Cardiac septum (tissue), 1 donor: ENCODE measurements at regions of chrX and their contacts with region 1.

Region 1: DNA sequence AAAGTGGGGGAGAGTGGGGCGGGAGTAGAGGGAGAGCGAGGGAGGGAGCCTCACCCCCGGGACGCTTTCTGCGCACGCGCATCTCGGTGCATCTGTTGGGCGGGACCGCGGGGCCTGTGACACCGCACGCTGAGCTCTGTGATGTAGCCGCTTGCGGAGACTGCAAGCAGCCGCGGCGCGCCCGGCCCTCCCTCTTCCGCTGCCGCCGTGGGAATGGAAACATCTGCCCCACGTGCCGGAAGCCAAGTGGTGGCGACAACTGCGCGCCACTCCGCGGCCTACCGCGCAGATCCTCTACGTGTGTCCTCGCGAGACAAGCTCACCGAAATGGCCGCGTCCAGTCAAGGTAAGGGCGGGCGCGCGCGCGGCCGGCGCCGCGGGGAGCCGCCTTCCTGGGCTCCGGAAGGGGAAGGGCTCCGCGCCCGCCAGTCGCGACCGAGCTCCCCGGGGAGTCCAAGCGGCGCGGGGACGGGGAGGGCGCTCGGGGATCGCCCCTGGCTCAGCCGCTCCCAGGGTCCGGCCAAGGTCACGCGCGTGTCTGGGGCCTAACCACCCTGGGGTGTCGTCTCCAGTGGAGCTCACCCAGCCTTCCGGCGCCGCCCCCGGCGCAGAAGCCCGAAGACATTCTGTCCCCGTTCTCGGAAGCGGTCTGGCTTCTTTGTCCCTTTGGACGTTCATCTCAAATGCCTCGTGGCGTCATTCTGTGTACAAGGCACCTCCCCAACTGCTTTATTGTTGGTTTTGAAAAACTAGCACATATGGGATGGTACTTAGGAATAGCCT is at the start of gene FUNDC2:
- DNase-seq: peak; percentile 96
- total RNA-seq, gene FUNDC2: 207 TPM

Region 2: DNA sequence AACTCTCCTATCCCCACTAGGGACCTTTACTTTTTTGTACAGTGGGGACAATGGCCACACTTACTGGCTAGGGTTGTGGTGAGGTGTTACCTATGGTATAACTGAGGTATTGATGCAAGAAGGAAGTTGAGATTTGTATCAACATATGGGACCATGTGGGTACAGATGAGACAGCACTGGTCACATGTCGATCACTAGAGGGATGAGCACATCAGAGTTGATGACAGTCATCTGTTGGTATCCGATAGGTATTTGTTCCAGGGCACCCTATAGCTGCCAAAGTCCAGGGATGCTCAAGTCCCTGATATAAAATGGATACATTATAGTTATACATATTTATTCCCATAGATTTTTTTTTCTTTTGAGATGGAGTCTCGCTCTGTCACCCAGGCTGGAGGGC is 523.9 kb before region 1 on chrX:
- intact Hi-C with region 1: no loop called
- DNase-seq: no peak

Region 3: GRCh38 chrX:154890990-154891639 is 135.8 kb before region 1 on chrX:
- intact Hi-C with region 1: no loop called
- DNase-seq: no peak

Region 4: DNA sequence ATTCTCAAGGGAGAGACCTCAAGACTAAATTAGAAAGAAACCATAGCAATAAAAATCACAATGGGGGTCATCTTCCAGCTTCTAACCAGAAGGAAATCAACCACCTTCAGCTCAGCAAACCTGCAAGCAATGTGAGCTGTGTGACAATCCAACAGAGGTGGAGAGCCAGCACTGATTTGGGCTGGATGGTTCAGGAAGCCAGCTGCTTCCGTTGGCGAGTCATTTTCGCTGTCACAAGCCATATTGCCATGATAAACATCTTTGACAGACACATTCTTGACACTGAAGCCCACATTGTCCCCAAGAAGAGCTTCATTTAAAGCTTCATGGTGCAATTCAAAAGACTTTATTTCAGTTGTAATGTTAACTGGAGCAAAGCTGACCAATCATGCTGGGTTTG is 118.1 kb before region 1 on chrX:
- intact Hi-C with region 1: no loop called
- DNase-seq: no peak

Region 5: DNA sequence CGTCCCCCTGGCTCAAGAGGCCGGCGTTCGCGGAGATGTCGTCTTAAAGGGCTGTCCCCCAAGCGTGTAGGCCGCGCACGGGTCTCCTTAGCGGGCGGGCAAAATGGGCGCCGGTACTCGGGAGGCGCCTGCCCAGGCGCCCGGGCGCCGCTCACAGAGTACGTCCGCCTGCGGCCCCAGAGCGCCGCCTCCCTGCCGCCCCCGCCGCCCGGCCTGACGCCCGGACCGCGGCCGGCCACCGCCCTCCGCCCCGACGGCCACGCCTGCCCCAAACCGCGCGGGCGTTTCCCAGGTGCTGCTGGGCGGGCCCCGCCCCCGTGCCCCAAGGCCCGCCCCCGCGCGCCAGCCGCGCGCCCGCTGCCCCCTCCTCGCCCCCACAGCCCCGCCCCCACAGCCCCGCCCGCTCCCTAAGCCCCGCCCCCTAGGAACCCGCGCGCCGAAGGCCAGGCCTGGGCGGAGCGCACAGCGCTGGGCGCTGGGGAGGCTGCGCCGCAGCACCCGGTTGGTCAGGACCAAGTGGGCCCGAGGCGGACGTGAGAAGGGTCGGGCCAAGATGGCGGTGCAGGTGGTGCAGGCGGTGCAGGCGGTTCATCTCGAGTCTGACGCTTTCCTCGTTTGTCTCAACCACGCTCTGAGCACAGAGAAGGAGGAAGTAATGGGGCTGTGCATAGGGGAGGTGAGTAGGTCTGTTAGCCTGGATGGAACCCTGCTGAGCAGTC is 44.2 kb after region 1 on chrX and contains the starts of genes BRCC3, CMC4 and MTCP1:
- intact Hi-C with region 1: loop called (anchors 2 kb)
- DNase-seq: peak; percentile 93
- total RNA-seq, gene BRCC3: 15.6 TPM
- total RNA-seq, gene CMC4: 19.4 TPM
- total RNA-seq, gene MTCP1: 41.4 TPM

Region 6: GRCh38 chrX:155169881-155170280 is 143.0 kb after region 1 on chrX:
- intact Hi-C with region 1: no loop called
- DNase-seq: no peak